Aorta (tissue), 5 donors: ENCODE measurements at regions of chr3 and their contacts with region 1.

Region 1: DNA sequence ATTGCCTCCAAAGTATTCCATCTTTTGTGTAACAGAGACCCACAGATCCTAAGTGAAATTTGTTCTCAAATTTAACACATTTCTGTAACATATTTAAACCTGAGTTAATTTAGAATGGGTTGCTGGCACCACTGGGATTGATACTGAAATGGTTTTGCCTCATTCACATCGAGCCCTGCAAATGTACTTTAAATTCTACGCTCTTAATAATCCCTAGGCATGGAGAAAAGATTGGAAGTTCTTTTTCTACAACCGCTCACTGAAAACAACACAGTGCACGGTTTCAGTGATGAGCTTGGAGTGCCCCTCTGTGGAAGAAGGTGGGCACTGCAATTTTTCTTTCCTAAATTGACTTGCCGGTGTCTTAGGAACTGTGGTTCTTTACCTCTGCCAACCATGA is 109.9 kb upstream of the ATP11B start:
- DNase-seq: peak in 1 of 2 donors; percentile 47
- ATAC-seq: peak; percentile 89
- H3K4me3 ChIP-seq: peak overlapping the region in 1 of 2 donors; percentile 53
- H3K27ac ChIP-seq: no peak overlapping the region
- H3K4me1 ChIP-seq: no peaks in the 10 kb centered on the region
- H3K27me3 ChIP-seq: peaks cover 0 to 1% of the 10 kb centered on the region in 2 donors

Region 2: DNA sequence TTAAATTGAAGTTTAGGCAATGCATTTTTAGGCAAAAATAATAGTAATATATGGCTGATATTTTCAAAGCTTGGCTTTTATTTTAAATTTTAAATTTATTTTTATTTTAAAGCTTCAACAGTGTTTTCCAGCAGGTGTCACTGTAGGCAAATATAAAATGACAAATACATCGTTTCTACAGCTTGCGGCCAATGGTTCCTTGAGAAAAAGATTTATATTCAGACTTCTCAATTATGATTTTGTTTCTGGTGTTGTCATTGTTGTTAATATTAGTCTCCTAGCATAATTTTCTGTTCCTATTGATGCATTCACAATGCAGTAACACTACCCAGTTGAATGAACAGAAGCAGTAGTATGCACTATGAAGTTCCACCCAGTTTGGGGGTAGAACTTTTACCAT is 1473.2 kb before region 1 on chr3:
- intact Hi-C with region 1: loop called (anchors 5 to 10 kb)
- DNase-seq: no peak
- ATAC-seq: no peak
- H3K4me3 ChIP-seq: no peak overlapping the region
- H3K27ac ChIP-seq: no peak overlapping the region
- H3K4me1 ChIP-seq: no peaks in the 10 kb centered on the region
- H3K27me3 ChIP-seq: no peaks in the 10 kb centered on the region

Region 3: DNA sequence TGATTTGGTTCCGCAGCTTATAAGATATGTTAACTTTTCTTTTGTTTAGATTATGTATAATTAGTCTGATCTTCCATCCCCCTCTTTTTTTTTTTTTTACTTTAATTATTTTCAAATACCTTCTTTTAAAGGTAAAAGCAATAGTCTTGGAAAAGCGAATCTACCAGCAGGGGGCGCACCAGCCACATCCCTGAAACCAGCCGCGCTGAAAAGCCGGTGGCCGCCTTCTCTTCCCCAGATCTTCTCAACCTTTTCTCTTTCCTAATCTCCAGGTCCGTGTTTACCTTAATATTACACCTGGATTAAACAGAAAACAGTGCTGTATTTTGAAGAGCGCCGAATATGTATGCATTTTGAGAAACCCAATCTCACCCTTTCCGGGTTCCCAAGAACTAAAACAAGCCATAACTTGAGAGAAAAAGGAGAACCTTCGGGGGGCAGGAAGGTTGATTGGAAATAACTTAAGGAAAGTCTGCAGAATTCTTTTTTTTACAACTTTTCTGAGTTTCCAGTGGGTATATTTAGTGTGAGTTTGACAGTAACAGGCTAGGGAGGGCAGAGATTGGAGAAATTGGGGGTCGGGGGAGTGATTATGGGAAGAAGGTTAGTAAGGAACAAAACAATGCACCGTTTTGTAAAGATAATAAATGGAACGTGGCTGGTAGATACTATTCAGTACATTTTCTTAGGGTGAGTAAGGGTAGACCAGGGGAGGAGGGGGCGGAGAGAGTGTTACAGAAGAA is 973.7 kb before region 1 on chr3:
- intact Hi-C with region 1: loop called (anchors 2 to 5 kb)
- DNase-seq: peak; percentile 73 to 92
- ATAC-seq: no peak
- H3K4me3 ChIP-seq: no peak overlapping the region
- H3K27ac ChIP-seq: no peak overlapping the region
- H3K4me1 ChIP-seq: no peaks in the 10 kb centered on the region
- H3K27me3 ChIP-seq: peaks cover 0 to under 1% of the 10 kb centered on the region in 2 donors

Region 4: DNA sequence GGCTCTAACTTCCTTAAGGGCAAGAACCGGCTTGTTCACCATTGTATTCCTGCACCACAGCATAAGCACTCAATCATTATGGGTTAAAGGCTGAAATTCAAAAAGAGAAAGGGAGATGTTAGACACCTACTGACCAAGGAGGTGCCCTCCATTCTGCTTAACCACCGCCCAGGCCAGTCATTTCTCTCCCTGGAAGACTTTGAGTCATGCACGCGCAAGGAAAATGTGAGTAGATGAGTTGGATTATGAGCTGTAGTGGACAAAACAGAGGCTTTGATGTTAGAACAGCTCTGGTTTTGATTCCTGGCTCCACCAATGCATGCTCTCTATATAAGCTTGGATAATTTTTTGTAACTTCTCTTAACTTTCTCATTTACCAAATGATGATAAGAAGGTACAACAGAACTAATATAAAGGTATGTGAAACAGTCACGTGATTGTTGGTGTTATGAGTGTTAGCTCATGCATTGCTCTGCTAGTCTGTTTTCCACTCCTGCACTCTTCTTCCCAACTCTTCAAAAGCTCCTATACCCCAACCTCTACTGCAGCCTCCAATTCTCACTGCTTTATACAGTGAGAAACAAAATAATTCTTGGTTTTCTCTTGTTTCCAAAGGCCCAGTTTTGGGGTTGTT is 38.5 kb before region 1 on chr3:
- intact Hi-C with region 1: no loop called
- DNase-seq: no peak
- ATAC-seq: no peak
- H3K4me3 ChIP-seq: no peak overlapping the region
- H3K27ac ChIP-seq: no peak overlapping the region
- H3K4me1 ChIP-seq: no peaks in the 10 kb centered on the region
- H3K27me3 ChIP-seq: peaks cover 0 to 2% of the 10 kb centered on the region in 2 donors

Region 5: DNA sequence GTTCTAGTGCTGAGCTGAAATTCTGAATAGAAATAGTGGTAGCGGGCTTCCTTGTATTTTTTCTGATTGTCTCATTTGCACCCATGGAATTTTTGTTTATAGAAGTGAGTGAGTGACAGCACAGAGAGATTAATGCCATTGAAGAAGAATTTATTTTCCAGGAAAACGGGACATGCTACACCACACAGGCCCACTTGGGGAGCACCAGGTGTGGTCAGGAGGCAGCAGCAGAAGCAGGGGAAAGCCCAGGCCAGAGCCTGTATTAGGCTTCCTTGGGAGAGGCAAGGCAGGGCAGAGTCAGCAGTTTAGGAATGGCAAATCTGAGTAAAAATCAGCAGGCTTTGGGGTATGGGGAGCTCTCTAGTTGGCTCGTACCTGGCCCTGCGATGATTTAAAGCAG is 21.5 kb after region 1 on chr3:
- intact Hi-C with region 1: no loop called
- DNase-seq: no peak
- ATAC-seq: no peak
- H3K4me3 ChIP-seq: no peak overlapping the region
- H3K27ac ChIP-seq: no peak overlapping the region
- H3K4me1 ChIP-seq: no peaks in the 10 kb centered on the region
- H3K27me3 ChIP-seq: no peaks in the 10 kb centered on the region